ENCODE measurements at regions of chr17 and their contacts with region 1.

Region 1: DNA sequence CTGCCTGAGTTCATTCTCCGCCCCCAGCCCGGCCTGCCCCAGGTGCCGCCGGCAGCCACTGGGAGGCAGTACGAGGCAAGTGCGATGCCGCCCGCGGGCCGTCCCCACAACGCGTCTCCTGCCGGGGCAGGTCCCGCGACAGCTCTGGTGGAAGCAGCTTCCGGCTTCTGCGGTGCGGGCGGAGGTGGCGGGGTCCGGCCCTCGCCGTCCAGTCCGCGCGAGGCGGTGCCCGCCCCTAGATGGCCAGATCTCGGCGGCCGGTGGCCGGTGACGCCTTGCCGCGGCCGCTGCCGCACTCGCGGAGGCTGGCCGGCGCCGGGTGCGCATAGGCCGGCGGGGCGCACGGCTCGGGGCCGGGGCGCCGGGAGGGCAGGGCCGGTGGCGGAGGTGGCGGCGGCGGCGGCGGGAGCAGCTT is 1.8 kb downstream of the GJD3 start:
- DNase-seq: peak; percentile 54 to 69
- ATAC-seq: peak; percentile 22 to 46 (median 34)
- H3K4me3 ChIP-seq: peak overlapping the region in 9 of 10 donors; percentile 40 to 67 (median 54)
- H3K27ac ChIP-seq: peak overlapping the region in 5 of 10 donors; percentile 28 to 81 (median 70)
- H3K4me1 ChIP-seq: peaks cover 0 to 37% (median 10%) of the 10 kb centered on the region in 9 donors
- H3K27me3 ChIP-seq: peaks cover 0 to 26% (median 0%) of the 10 kb centered on the region in 7 donors
- CTCF ChIP-seq: peak in 7 of 9 donors; percentile 45 to 70 (median 64)

Region 2: GRCh38 chr17:40203131-40203530 is 159.6 kb before region 1 on chr17:
- intact Hi-C with region 1: loop called in 7 of 10 experiments (anchors 5 to 10 kb)
- DNase-seq: no peak
- ATAC-seq: peak in 5 of 8 donors; percentile 20 to 55 (median 32)
- H3K4me3 ChIP-seq: no peak overlapping the region
- H3K27ac ChIP-seq: peak overlapping the region in 2 of 10 donors; percentile 22 to 33
- H3K4me1 ChIP-seq: peaks cover 0 to 20% (median 11%) of the 10 kb centered on the region in 9 donors
- H3K27me3 ChIP-seq: no peaks in the 10 kb centered on the region
- CTCF ChIP-seq: no peak

Region 3: DNA sequence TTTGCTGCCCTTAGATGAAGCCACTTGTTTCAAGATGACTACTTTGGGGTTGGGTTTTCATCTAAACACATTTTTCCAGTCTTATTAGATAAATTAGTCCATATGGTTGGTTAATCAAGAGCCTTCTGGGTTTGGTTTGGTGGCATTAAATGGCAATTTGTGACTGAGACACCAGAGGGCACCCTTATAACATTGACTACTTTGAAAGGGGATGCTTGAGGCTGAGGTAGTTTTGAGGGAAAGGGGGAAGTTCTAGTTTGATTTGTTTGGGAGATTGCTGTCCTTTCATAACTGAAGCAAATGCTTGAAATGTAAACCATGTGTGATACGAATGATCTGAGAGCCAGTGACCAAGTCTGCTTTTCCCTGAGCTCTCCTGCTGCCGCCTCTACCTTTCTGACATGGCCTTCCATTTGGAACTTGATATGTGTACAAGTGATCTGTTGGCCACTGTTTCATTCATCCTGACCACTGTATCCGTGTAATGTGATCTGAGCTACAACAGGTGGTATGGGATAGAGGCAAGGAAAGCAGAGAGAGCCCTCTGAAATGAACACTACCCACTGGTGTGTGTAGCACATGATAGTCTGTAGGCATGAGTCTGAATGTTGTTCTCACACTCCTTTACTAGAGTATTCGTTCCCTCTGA is 59.6 kb before region 1 on chr17:
- intact Hi-C with region 1: loop called in 1 of 10 experiments (anchors 1 kb)
- DNase-seq: peak in 1 of 2 donors; percentile 71
- ATAC-seq: peak in 7 of 8 donors; percentile 51 to 72 (median 65)
- H3K4me3 ChIP-seq: no peak overlapping the region
- H3K27ac ChIP-seq: peak overlapping the region in 6 of 10 donors; percentile 14 to 76 (median 22)
- H3K4me1 ChIP-seq: peaks cover 5 to 70% (median 51%) of the 10 kb centered on the region in 9 donors
- H3K27me3 ChIP-seq: no peaks in the 10 kb centered on the region
- CTCF ChIP-seq: peak; percentile 43 to 89 (median 81)

Region 4: GRCh38 chr17:40317880-40318829 is 44.5 kb before region 1 on chr17:
- intact Hi-C with region 1: no loop called
- DNase-seq: peak; percentile 94 to 96
- ATAC-seq: peak; percentile 86 to 93 (median 91)
- H3K4me3 ChIP-seq: peak overlapping the region; percentile 75 to 100 (median 94)
- H3K27ac ChIP-seq: peak overlapping the region; percentile 83 to 98 (median 96)
- H3K4me1 ChIP-seq: peaks cover 47 to 96% (median 88%) of the 10 kb centered on the region in 9 donors
- H3K27me3 ChIP-seq: no peaks in the 10 kb centered on the region
- CTCF ChIP-seq: peak in 1 of 9 donors; percentile 11

Region 5: DNA sequence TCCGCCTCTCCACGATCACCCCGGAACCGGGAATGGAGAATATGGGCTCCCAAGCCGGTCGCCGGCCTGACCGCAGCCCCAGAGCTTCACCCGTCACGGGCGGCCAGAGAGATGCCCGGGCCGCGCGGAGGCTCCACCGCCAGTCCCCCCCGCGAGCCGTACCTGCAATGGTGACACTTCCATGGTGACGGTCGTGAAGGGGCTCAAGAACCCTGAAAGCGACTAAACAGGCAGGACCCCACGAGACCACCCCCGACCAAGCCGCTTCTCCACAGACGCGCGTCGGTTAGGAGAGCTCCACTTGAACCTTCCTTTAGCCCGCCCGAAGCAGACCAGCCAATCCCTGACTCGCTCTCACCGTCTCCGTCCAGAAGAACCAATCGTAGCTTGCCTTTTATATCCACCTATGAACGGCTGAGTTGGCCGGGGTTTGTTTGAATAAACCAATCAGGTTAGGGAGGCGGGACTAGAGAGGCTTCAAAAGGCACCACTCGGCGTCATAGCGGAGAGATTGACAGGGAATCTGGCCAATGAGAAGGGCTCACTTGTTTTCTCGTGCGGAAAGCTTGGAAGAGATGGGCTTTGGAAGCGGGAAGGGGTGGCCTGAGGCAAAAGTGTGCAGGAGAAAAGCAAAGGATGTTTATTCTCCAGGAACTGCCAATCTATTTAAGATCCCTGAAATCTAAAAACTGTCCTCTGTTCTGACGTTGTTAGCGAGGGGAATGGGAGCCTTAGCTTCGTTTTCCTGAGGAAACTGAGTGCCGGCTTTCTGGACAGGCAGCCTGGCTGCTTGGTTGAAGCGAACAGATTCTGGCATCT is 55.1 kb after region 1 on chr17 and contains the start of gene TOP2A:
- intact Hi-C with region 1: loop called in 8 of 10 experiments (anchors 1 to 10 kb)
- DNase-seq: peak; percentile 81 to 100
- ATAC-seq: peak; percentile 98 to 100 (median 100)
- H3K4me3 ChIP-seq: peak within 1 kb of the TSS; percentile 35 to 86 (median 60)
- H3K27ac ChIP-seq: peak within 1 kb of the TSS in 6 of 10 donors; percentile 29 to 76 (median 50)
- H3K4me1 ChIP-seq: peaks cover 8 to 48% (median 14%) of the 10 kb centered on the region in 9 donors
- H3K27me3 ChIP-seq: peaks cover 0 to 9% (median 0%) of the 10 kb centered on the region in 7 donors
- CTCF ChIP-seq: no peak
- total RNA-seq, gene TOP2A: 0.17 to 20.0 (median 1.0) TPM

Region 6: DNA sequence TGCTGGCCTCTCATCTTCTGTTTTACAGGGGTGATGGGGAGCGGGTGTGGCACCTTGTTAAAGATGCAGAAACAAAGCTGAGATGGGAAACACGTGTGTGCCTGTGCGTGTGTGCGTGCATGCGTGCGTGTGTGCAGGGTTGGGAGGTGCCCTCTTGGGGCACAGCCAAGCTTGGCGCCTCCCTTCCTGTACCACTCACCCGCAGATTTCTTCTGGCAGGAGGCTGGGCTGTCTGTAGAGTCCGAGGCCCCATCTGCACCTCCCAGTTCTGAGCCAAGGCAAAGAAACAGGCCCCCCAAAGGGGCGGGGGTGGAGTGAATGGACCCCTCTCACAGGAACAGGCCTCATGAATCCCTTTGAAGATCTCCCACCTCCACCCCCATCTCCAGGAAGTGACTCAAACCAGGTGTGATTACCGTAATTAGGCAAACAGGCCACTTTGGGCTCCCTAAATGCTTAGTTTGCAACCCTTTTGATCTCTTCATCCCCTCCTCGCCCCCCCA is 117.8 kb after region 1 on chr17:
- intact Hi-C with region 1: loop called in 2 of 10 experiments (anchors 5 kb)
- DNase-seq: peak in 1 of 2 donors; percentile 37
- ATAC-seq: peak in 6 of 8 donors; percentile 13 to 54 (median 40)
- H3K4me3 ChIP-seq: no peak overlapping the region
- H3K27ac ChIP-seq: peak overlapping the region in 1 of 10 donors; percentile 82
- H3K4me1 ChIP-seq: peaks cover 0 to 42% (median 6%) of the 10 kb centered on the region in 9 donors
- H3K27me3 ChIP-seq: no peaks in the 10 kb centered on the region
- CTCF ChIP-seq: no peak

Region 7: DNA sequence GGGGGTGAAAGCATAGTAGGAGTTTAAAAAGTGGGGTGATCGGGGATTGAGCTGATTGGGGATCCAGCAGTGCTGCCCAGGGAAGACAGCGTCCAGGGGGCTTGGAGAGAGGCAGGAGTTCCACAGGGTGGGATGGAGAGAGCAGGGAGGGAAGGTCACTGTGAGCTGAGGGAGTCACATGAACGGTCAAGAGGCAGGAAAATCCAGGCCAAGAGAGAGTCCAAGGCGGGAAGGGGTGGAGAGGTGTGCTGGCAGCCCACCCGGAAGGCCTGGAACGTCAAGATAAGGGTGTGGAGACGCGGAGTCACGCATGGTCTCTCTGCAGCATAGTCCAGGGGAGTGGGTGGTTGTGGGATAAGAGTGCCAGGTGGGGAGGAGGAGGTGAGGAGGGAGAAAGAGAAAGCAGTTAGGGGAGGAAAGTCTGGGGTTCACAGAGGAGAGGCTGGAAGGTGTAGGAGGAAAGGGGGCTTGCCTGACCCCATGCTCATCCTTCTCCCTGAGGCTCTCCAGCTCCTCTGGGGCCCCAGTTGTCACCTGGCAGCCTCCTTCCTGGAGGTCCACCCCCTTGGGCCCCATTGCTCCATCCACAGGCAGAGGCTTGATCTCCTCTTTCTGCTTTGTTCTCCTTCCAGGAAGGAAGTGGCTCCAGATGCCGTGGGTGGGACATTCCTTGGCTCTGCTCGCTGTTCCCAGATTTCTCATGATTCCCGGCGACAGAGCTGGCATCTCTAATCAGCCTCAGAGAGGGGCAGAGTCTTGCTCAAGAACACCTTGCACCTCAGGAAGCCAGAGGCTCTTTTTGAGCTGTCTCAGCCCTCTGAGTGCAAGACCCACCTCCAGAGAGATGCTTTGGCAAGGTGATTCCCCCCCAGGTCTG is 173.8 kb after region 1 on chr17:
- intact Hi-C with region 1: loop called in 9 of 10 experiments (anchors 1 to 10 kb)
- DNase-seq: peak; percentile 70 to 80
- ATAC-seq: peak; percentile 40 to 81 (median 62)
- H3K4me3 ChIP-seq: no peak overlapping the region
- H3K27ac ChIP-seq: peak overlapping the region; percentile 5 to 97 (median 89)
- H3K4me1 ChIP-seq: peaks cover 37 to 96% (median 82%) of the 10 kb centered on the region in 9 donors
- H3K27me3 ChIP-seq: no peaks in the 10 kb centered on the region
- CTCF ChIP-seq: no peak